Right ventricle myocardium inferior (tissue), 1 donor: ENCODE measurements at regions of chr20 and their contacts with region 1.

Region 1: DNA sequence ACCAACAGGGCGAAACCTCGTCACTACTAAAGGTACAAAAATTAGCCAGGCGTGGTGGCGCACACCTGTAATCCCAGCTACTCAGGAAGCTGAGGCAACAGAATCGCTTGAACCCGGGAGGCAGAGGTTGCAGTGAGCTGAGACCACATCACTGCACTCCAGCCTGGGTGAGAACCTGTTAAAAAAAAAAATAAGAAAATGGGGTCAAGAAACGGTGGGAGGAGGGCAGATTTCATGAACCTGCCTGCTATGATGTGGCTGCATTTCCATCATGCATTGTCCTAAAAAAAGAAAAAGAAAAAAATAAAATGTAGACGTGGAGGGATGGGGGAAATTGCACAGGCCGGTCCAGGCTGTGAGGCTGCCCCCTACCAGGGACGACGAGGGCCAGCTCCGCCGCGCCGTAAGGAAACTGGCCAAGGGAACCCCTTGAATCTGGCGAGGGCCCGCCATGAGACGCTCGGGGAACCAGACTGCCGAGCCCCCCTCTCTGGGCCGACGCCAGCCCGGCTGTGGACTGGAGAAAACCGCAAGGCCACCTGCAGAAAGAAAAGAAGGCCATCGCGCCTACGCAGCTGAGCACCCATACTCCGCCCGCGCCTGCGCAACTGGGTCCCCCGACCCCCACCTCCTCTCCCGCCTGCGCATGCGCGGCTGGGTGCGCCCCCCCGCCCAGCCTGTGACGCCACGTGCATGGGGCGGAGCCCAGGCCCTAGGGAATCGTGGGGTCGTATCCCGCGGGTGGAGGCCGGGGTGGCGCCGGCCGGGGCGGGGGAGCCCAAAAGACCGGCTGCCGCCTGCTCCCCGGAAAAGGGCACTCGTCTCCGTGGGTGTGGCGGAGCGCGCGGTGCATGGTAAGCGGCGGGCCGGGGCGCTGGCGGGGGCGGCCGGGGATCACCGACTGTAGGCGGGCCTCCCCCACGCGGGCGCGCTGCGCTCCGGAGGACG is at the start of gene ENTPD6:
- DNase-seq: peak; percentile 94
- ATAC-seq: peak; percentile 92
- total RNA-seq, gene ENTPD6: 132 TPM

Region 2: GRCh38 chr20:25081065-25081729 is 114.1 kb before region 1 on chr20:
- intact Hi-C with region 1: no loop called
- DNase-seq: no peak
- ATAC-seq: no peak

Region 3: GRCh38 chr20:25220021-25220730 is 24.9 kb after region 1 on chr20:
- intact Hi-C with region 1: loop called (anchors 2 kb)
- DNase-seq: no peak
- ATAC-seq: no peak

Region 4: DNA sequence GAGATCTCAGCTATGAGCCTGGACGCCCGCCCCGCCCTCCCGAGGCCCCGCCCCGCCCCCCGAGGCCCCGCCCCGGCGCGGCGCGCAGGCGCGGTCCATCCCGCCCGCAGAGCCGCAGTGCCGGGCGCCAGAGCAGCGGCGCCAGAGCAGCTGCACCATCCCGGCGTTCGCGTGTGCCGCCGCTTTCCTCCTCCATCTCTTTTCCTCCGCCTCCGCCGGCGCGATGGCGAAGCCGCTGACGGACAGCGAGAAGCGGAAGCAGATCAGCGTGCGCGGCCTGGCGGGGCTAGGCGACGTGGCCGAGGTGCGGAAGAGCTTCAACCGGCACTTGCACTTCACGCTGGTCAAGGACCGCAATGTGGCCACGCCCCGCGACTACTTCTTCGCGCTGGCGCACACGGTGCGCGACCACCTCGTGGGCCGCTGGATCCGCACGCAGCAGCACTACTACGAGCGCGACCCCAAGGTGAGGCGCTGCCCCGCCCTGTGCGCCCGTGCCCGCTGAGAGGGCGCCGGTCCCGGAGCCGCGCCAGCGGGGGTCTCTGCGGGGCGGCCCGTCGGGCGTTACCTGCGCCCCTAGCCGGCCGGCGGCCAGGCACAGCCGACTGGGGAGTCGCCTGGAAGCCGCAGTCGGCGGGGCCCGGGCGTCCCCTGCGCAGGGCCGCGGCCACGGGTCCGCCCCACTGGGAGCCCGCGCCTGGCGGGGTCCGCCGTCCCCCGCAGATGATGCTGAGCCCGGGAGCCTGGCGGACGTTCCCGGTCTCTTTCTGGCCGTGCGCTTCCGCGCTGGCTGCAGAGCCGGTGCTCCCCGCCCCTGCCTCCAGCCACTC is 52.9 kb after region 1 on chr20 and contains the start of gene PYGB:
- intact Hi-C with region 1: loop called (anchors 2 kb)
- DNase-seq: peak; percentile 91
- ATAC-seq: peak; percentile 91
- total RNA-seq, gene PYGB: 174 TPM